Panc1 (cell line): ENCODE measurements at regions of chr20 and their contacts with region 1.

Region 1: GRCh38 chr20:62972270-62973032 is 19.9 kb downstream of the SLC17A9 start:
- DNase-seq: peak; percentile 48
- ATAC-seq: peak; percentile 92
- H3K4me3 ChIP-seq: peak overlapping the region; percentile 32 to 43
- H3K27ac ChIP-seq: no peak overlapping the region
- H3K4me1 ChIP-seq: no peaks in the 10 kb centered on the region; the same call in 1 of the 2 replicates
- H3K27me3 ChIP-seq: no peaks in the 10 kb centered on the region
- CTCF ChIP-seq: peak; percentile 91

Region 2: DNA sequence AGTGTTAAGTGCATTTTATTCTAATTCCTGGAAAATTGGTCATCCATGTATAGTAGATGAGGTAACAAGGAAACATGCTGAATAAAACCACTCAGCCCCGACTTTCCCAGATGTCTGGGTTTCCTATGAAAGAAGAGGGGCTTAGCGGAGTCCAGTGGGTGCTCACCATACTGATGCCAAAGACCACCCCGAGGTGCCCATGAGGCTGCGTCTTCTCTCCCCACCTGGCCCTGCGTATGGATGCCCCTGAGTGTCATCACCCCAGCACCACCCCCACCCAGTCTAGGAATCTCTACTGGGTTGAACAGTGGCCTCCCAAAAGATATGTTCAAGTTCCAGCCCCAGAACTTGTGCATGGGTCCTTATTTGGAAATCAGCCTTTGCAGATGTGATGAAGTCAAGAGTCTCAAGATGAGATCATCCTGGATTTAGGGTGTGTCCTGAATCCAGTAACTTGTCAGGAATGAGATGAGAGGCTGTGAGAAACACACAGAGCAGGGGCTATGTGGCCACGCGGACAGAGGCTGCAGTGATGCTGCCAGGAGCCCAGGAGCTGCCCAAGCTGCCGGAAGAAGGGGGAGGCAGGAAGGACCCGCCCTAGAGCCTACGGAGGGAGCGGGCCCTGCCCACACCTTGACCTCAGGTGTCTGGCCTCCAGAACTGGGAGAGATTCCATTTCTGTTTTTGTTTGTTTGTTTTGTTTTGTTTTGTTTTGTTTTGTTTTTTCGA is 1845.0 kb before region 1 on chr20:
- CTCF ChIA-PET with region 1: no interaction called
- POLR2A ChIA-PET with region 1: no interaction called
- in situ Hi-C with region 1: no loop called
- intact Hi-C with region 1: no loop called
- DNase-seq: no peak
- ATAC-seq: no peak
- H3K4me3 ChIP-seq: no peak overlapping the region
- H3K27ac ChIP-seq: no peak overlapping the region
- H3K4me1 ChIP-seq: no peaks in the 10 kb centered on the region
- H3K27me3 ChIP-seq: no peaks in the 10 kb centered on the region; the same call in 1 of the 2 replicates
- CTCF ChIP-seq: no peak

Region 3: DNA sequence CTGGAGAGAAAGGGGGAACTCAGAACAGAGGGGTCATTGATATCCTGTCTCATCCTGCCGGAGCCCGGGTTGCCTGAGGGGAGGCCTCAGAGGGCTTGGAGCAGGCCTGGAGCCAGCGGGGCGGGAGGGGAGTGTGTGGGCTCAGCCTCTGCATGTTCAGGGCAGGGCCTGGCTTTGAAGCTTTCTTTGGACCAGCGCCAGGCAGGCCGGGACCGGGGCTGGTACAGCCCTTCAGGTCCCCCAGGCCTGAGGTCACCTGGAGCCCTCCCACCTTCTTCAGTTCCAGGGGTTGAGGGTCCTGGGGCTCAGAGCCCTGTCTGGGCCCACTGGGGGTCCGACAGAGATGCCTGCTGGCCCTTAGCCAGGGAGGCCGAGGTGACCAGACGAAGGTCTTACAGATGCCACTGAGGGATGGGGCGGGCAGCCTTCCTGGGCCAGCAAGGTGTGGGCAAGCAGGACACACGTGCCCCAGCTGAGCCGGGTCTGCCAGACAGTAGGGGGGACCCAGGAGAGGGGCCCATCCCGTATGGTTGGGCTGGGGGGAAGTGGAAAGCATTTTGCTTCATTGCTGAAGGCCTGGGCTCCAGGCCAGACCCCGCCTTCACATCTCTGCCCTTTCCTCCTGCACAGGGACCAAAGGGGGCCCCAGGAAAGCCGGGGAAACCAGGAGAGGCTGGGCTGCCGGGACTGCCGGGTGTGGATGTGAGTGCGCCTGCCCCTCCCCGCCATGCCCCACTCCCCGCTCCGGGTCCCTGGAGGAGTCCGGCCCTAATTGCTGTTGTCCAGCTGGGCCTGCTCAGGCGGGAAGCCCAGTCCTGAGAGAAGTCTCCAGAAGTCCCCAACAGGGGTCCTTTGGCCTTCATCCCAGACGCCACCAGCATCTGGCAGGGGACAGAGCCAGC is 153.6 kb before region 1 on chr20:
- CTCF ChIA-PET with region 1: no interaction called
- POLR2A ChIA-PET with region 1: no interaction called
- in situ Hi-C with region 1: no loop called
- intact Hi-C with region 1: no loop called
- DNase-seq: no peak
- ATAC-seq: peak; percentile 27
- H3K4me3 ChIP-seq: 0 out of 4 replicates have a peak overlapping the region, but pooled peaks of 1 of the 2 experiments have one; percentile 17
- H3K27ac ChIP-seq: peak overlapping the region; percentile 79
- H3K4me1 ChIP-seq: peaks cover 82% of the 10 kb centered on the region
- H3K27me3 ChIP-seq: no peaks in the 10 kb centered on the region
- CTCF ChIP-seq: no peak

Region 4: DNA sequence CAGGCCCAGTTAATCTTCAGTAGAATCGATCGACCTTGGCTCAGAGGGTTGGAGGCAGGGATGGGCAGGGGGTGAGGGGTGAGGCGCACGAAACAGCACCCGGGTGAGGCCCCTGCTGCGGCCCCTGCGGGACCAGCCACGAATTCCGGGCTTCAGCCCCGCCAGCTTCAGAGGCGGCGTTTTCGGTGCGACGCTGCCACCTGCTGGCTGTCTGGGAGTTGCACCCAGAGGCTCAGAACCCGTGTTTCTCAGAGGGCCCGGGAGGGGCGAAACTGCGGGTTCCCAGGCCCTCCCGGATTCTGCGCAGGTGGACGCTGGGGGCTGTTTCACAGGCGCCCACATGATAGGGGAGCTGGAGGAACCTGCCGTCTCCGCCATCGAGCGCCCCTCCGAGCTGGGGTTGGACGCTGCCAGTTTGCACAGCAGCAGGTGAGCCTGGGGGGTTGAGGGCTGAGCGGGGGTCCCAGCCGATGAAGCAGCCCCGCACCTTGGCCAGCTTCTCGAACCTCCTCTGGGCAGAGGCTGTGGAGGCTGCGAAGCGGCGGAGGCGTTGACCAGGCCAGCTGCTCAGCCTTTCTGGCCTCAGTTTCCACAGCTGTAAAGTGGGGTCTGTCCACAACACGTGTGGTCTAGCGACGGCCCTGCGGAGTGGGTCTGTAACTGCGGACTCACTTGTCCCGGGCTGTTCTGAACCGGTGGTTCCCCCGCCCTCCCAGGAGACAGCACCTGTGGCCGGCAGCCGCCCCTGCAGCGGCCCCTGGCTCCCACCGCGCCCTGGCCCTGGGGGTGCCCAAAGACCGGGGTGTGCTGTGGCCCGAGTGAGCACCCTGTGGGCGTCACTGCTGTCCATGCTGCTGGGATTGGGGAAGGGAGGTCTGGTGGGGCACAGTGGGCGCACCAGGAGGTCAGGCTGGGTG is 36.9 kb after region 1 on chr20:
- CTCF ChIA-PET with region 1: interaction called, 13 read pairs
- POLR2A ChIA-PET with region 1: no interaction called
- in situ Hi-C with region 1: no loop called
- intact Hi-C with region 1: loop called (anchors 2 kb)
- DNase-seq: peak; percentile 41
- ATAC-seq: peak; percentile 91
- H3K4me3 ChIP-seq: peak overlapping the region in 1 of 2 experiments; percentile 25; a peak in 1 of 4 replicates
- H3K27ac ChIP-seq: no peak overlapping the region
- H3K4me1 ChIP-seq: peaks cover 6% of the 10 kb centered on the region
- H3K27me3 ChIP-seq: peaks cover 3% of the 10 kb centered on the region; the same call in 1 of the 2 replicates
- CTCF ChIP-seq: peak; percentile 94

Region 5: DNA sequence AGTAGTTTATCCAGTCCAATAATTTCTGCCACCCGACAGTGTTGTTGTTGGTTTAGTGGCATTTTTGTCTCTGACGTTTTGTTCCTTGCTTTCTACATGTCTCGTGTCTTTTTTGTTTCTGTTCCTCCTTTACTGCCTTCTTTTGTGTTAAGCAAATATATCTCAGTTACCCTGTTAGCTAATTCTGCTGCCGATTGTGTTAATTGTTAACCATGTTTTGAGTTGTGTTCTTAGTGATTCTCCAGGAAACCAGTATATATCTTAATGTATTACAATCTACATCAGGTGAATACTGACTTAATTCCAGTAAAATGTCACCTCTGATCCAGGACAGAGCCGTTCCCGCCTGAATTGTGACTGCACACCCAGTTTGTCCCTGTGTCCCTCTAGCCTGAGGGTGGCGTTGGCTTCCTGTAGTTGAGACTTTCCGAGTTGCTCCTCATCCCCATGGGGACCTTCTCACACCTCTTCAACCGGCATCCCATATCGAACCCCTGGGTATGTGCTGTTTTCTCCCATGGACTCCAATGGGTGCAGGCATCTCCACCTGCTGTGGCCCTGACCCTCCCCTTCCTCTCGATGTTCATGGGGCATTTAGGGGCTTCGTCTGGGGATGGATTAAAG is 70.1 kb after region 1 on chr20:
- CTCF ChIA-PET with region 1: no interaction called
- POLR2A ChIA-PET with region 1: no interaction called
- in situ Hi-C with region 1: no loop called
- intact Hi-C with region 1: no loop called
- DNase-seq: no peak
- ATAC-seq: no peak
- H3K4me3 ChIP-seq: no peak overlapping the region
- H3K27ac ChIP-seq: no peak overlapping the region
- H3K4me1 ChIP-seq: no peaks in the 10 kb centered on the region
- H3K27me3 ChIP-seq: peaks cover 21% of the 10 kb centered on the region
- CTCF ChIP-seq: no peak